ENCODE measurements at regions of chr10 and their contacts with region 1.

Region 1: DNA sequence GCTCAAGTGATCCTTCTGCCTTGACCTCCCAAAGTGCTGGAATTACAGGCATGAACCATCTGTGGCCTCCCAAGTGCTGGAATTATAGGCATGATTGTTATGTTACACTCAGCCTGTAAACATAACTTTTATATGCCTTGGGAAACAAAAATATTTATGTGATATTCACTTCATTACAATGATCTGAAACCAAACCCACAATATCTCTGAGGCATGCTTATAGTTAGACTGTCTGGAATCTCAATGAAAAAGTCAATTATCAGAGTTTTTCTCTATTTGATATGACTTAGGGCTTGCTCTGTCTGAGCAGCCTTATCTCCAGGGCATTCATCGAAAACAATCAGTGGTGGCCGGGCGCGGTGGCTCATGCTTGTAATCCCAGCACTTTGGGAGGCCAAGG is 195.3 kb upstream of the MYO3A start:
- DNase-seq: no peak
- H3K4me3 ChIP-seq: no peak overlapping the region
- H3K27ac ChIP-seq: no peak overlapping the region
- H3K4me1 ChIP-seq: no peaks in the 10 kb centered on the region
- H3K27me3 ChIP-seq: no peaks in the 10 kb centered on the region
- CTCF ChIP-seq: no peak
- EP300 ChIP-seq: no peak
- RAD21 ChIP-seq: no peak

Region 2: DNA sequence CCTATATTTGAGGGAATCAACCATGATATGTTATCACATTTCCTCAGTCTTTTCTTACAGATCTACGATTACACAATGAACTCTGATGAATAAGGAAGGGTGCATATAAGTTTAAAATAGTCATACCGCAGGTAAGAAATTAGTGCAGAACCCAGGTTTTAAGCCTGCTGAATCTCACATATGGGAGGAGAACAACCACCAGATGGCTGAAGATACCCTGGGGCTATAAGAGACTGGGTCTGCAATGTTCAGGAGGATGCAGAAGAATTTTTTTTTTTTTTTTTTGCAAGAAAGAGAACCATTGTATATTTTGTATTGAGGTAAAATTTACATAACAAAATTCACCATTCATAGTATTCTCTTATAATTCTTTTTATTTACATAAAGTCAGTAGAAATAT is 177.0 kb before region 1 on chr10:
- CTCF ChIA-PET with region 1: no interaction called
- POLR2A ChIA-PET with region 1: no interaction called
- DNase-seq: peak; percentile 14
- H3K4me3 ChIP-seq: no peak overlapping the region
- H3K27ac ChIP-seq: no peak overlapping the region
- H3K4me1 ChIP-seq: no peaks in the 10 kb centered on the region; a peak in 1 of 4 replicates
- H3K27me3 ChIP-seq: no peaks in the 10 kb centered on the region
- CTCF ChIP-seq: no peak
- EP300 ChIP-seq: no peak
- RAD21 ChIP-seq: no peak

Region 3: DNA sequence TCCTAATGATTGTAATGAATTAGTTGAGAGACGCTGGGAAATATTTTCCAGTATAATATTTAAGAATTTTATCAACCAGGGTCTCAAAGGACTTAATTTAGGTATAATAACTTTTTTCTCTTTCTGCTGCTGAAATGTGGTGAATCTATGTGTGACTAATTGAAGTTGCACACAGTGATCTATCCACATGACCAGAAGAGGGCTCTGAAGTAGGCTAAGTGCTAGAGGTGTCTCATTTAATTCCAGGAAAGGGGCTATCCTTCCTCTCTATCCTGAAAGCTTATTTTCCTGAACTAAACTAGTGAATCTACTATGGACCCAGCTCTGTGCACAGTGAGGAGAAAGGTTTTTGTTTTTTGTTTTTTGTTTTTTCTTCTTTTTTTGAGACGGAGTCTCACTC is 99.1 kb before region 1 on chr10:
- CTCF ChIA-PET with region 1: no interaction called
- POLR2A ChIA-PET with region 1: no interaction called
- DNase-seq: no peak
- H3K4me3 ChIP-seq: no peak overlapping the region
- H3K27ac ChIP-seq: no peak overlapping the region
- H3K4me1 ChIP-seq: no peaks in the 10 kb centered on the region
- H3K27me3 ChIP-seq: no peaks in the 10 kb centered on the region
- CTCF ChIP-seq: no peak
- EP300 ChIP-seq: no peak
- RAD21 ChIP-seq: no peak

Region 4: DNA sequence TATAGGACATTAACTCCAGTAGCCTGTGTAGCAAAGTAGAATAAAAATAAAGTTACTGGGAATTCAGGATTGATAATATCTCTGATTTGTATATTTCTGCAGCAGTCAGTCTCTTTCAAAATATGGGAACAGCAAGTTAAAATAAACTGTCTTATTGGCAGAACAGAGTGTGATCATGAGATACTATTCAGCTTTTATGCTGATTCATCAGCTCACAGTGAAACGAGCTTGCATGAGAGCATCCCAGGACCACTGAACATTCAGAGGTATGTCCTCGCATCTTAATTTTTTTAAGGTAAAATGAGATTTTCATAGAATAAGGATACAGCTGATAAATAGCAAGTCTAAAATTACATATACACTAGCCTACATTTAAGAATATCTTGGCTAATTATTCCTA is 87.2 kb before region 1 on chr10:
- CTCF ChIA-PET with region 1: no interaction called
- POLR2A ChIA-PET with region 1: no interaction called
- DNase-seq: no peak
- H3K4me3 ChIP-seq: no peak overlapping the region
- H3K27ac ChIP-seq: no peak overlapping the region
- H3K4me1 ChIP-seq: no peaks in the 10 kb centered on the region
- H3K27me3 ChIP-seq: no peaks in the 10 kb centered on the region
- CTCF ChIP-seq: no peak
- EP300 ChIP-seq: no peak
- RAD21 ChIP-seq: no peak

Region 5: GRCh38 chr10:25725918-25726716 is 12.7 kb before region 1 on chr10:
- CTCF ChIA-PET with region 1: interaction called, 21 read pairs
- POLR2A ChIA-PET with region 1: no interaction called
- DNase-seq: peak; percentile 46
- H3K4me3 ChIP-seq: no peak overlapping the region
- H3K27ac ChIP-seq: no peak overlapping the region
- H3K4me1 ChIP-seq: no peaks in the 10 kb centered on the region
- H3K27me3 ChIP-seq: no peaks in the 10 kb centered on the region
- CTCF ChIP-seq: peak; percentile 75
- EP300 ChIP-seq: no peak
- RAD21 ChIP-seq: peak; percentile 70